ENCODE measurements at regions of chr5 and their contacts with region 1.

Region 1: GRCh38 chr5:140244525-140245025 is 58.3 kb downstream of the PFDN1 start:
- DNase-seq: peak; percentile 98
- ATAC-seq: peak; percentile 49
- H3K4me3 Mint-ChIP-seq: no peak overlapping the region
- H3K27ac Mint-ChIP-seq: 0 out of 2 replicates have a peak overlapping the region, but pooled peaks have one; percentile 5
- H3K4me1 Mint-ChIP-seq: peaks cover 43% of the 10 kb centered on the region
- H3K27me3 Mint-ChIP-seq: no peaks in the 10 kb centered on the region
- CTCF ChIP-seq: peak; percentile 81

Region 2: GRCh38 chr5:140169410-140169809 is 75.2 kb before region 1 on chr5:
- CTCF ChIA-PET with region 1: interaction called, 20 read pairs
- POLR2A ChIA-PET with region 1: no interaction called
- DNase-seq: no peak
- ATAC-seq: peak; percentile 74
- H3K4me3 Mint-ChIP-seq: no peak overlapping the region
- H3K27ac Mint-ChIP-seq: no peak overlapping the region
- H3K4me1 Mint-ChIP-seq: peaks cover 18% of the 10 kb centered on the region
- H3K27me3 Mint-ChIP-seq: peaks cover 19% of the 10 kb centered on the region
- CTCF ChIP-seq: no peak

Region 3: GRCh38 chr5:140227048-140227447 is 17.5 kb before region 1 on chr5:
- CTCF ChIA-PET with region 1: interaction called, 39 read pairs
- POLR2A ChIA-PET with region 1: no interaction called
- DNase-seq: no peak
- ATAC-seq: peak; percentile 73
- H3K4me3 Mint-ChIP-seq: no peak overlapping the region
- H3K27ac Mint-ChIP-seq: no peak overlapping the region
- H3K4me1 Mint-ChIP-seq: no peaks in the 10 kb centered on the region
- H3K27me3 Mint-ChIP-seq: no peaks in the 10 kb centered on the region
- CTCF ChIP-seq: no peak

Region 4: DNA sequence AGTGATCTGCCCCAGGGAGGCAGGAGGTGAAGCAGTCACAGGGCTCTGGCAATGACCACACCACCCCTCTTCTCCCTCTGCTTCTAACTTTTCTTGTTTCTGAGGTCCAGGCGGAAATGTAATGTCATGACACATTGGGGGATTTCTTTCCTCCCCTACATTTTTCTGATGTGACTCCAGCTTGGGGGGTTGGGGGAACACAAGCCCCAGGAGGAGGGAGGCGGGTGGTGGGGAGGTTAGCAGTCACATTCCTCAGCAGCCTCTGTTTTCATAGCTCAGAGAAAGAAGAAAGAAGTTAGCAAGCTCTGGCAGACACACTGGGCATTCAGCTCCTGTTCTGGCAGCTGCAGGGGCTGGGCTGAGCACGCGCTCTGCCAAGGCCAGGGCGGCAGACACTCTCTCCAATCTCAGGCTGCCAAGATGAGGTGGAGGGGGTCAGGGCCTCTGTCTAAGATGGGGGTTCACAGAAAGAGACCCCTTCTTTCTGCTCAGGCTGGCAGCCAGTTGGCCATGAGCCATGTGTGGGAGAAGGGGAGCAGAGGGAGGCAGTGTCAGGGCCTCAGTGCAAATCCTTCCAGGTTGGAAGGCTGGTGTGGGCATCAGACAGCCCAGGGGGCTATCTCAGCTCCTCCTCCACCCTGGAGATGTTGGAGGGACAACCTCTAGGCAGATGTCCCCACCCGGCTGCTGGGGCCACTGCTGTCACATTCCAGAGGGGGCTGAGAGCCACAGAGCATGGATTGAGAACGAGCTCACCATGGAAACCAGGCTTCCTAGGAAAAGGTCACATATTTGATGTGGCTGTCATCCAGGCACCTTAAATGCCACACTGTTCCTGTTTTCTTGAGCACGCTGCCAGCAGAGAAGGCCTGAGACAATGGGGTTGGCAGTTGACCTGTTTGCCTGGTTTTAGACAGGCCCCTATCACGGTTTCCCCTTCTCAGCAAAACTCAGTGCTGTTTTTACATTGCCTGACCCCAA is 78.5 kb after region 1 on chr5:
- CTCF ChIA-PET with region 1: interaction called, 31 read pairs
- POLR2A ChIA-PET with region 1: interaction called, 3 read pairs
- DNase-seq: no peak
- ATAC-seq: no peak
- H3K4me3 Mint-ChIP-seq: no peak overlapping the region
- H3K27ac Mint-ChIP-seq: no peak overlapping the region
- H3K4me1 Mint-ChIP-seq: peaks cover 12% of the 10 kb centered on the region
- H3K27me3 Mint-ChIP-seq: peaks cover 3% of the 10 kb centered on the region
- CTCF ChIP-seq: no peak

Region 5: GRCh38 chr5:140357726-140358093 is 113.1 kb after region 1 on chr5:
- CTCF ChIA-PET with region 1: interaction called, 621 read pairs
- POLR2A ChIA-PET with region 1: interaction called, 6 read pairs
- DNase-seq: peak; percentile 87
- ATAC-seq: peak; percentile 93
- H3K4me3 Mint-ChIP-seq: peak overlapping the region; percentile 61
- H3K27ac Mint-ChIP-seq: peak overlapping the region; percentile 95
- H3K4me1 Mint-ChIP-seq: peaks cover 10% of the 10 kb centered on the region
- H3K27me3 Mint-ChIP-seq: peaks cover 8% of the 10 kb centered on the region; the same call in 1 of the 2 replicates
- CTCF ChIP-seq: peak; percentile 69

Region 6: DNA sequence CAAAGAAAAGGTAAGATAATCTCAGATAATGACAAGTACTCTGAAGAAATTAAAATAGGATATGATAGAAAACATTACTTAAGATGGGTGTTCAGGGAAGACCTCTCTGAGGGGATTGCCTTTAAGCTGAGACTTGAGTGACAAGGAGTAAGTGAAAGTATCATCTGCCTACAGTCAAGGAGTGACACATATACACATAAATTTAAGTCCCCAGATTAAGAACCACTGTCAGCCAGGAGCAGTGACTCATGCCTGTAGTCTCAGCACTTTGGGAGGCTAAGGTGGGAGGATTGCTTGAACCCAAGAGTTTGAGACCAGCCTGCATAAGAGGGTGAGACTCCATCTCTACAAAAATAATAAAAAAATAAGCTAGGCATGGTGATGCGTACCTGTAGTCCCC is 137.4 kb after region 1 on chr5:
- CTCF ChIA-PET with region 1: no interaction called
- POLR2A ChIA-PET with region 1: no interaction called
- DNase-seq: no peak
- ATAC-seq: no peak
- H3K4me3 Mint-ChIP-seq: no peak overlapping the region
- H3K27ac Mint-ChIP-seq: no peak overlapping the region
- H3K4me1 Mint-ChIP-seq: no peaks in the 10 kb centered on the region
- H3K27me3 Mint-ChIP-seq: peaks cover 3% of the 10 kb centered on the region
- CTCF ChIP-seq: no peak

Region 7: GRCh38 chr5:140401362-140402257 is 157.0 kb after region 1 on chr5 and contains the start of gene ANKHD1:
- CTCF ChIA-PET with region 1: interaction called, 11 read pairs
- POLR2A ChIA-PET with region 1: interaction called, 6 read pairs
- DNase-seq: peak; percentile 98
- ATAC-seq: peak; percentile 87
- H3K4me3 Mint-ChIP-seq: no peak within 1 kb of the TSS
- H3K27ac Mint-ChIP-seq: peak within 1 kb of the TSS; percentile 95
- H3K4me1 Mint-ChIP-seq: peaks cover 47% of the 10 kb centered on the region
- H3K27me3 Mint-ChIP-seq: no peaks in the 10 kb centered on the region
- CTCF ChIP-seq: no peak
- total RNA-seq, gene ANKHD1: 89.8 to 113 TPM (median 105 TPM) in 3 replicates